PC-3 (cell line): ENCODE measurements at regions of chr3 and their contacts with region 1.

Region 1: DNA sequence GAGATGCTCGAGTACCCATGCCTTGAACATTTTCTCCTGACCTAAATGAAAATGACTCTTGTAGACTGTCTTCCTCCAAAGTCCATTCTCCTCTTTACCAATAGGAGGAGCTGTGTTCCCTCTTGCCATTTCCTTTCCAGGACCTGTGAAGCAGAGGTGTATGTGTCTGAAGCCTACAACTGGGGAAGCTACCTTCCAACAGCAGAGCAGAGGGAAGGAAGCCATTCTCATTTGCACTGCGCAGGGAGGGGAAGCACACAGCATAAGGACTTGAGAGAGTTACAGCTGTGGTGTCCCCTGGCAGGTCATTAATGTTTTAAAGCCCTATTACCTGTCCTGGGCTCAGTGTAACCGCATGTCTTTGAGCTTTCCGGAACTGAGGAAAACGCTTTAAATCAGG is 38.7 kb downstream of the HSPBAP1 start:
- DNase-seq: peak; percentile 85
- ATAC-seq: peak; percentile 96
- H3K4me3 ChIP-seq: no peak overlapping the region
- H3K27ac ChIP-seq: no peak overlapping the region
- H3K4me1 ChIP-seq: no peaks in the 10 kb centered on the region
- H3K27me3 ChIP-seq: no peaks in the 10 kb centered on the region
- CTCF ChIP-seq: peak; percentile 97

Region 2: GRCh38 chr3:122864498-122864897 is 109.6 kb after region 1 on chr3:
- CTCF ChIA-PET with region 1: no interaction called
- POLR2A ChIA-PET with region 1: no interaction called
- intact Hi-C with region 1: loop called (anchors 10 kb)
- DNase-seq: no peak
- ATAC-seq: no peak
- H3K4me3 ChIP-seq: no peak overlapping the region
- H3K27ac ChIP-seq: no peak overlapping the region
- H3K4me1 ChIP-seq: no peaks in the 10 kb centered on the region
- H3K27me3 ChIP-seq: no peaks in the 10 kb centered on the region
- CTCF ChIP-seq: no peak

Region 3: GRCh38 chr3:122942937-122943827 is 188.3 kb after region 1 on chr3:
- CTCF ChIA-PET with region 1: interaction called, 8 read pairs
- POLR2A ChIA-PET with region 1: no interaction called
- intact Hi-C with region 1: loop called (anchors 2 kb)
- DNase-seq: peak; percentile 84
- ATAC-seq: peak; percentile 89
- H3K4me3 ChIP-seq: no peak overlapping the region
- H3K27ac ChIP-seq: no peak overlapping the region
- H3K4me1 ChIP-seq: peaks cover 19% of the 10 kb centered on the region
- H3K27me3 ChIP-seq: no peaks in the 10 kb centered on the region
- CTCF ChIP-seq: peak; percentile 98